ENCODE measurements at regions of chr17 and their contacts with region 1.

Region 1: GRCh38 chr17:36482611-36483504 is 3.6 kb upstream of the ZNHIT3 start:
- DNase-seq: peak; percentile 93
- ATAC-seq: peak; percentile 82
- H3K4me3 Mint-ChIP-seq: peak overlapping the region; percentile 35
- H3K27ac Mint-ChIP-seq: no peak overlapping the region
- H3K4me1 Mint-ChIP-seq: peaks cover 29% of the 10 kb centered on the region
- H3K27me3 Mint-ChIP-seq: peaks cover 64% of the 10 kb centered on the region
- CTCF ChIP-seq: peak; percentile 78

Region 2: GRCh38 chr17:35969558-35970380 is 513.1 kb before region 1 on chr17:
- CTCF ChIA-PET with region 1: interaction called, 21 read pairs
- POLR2A ChIA-PET with region 1: no interaction called
- DNase-seq: peak; percentile 88
- ATAC-seq: peak; percentile 92
- H3K4me3 Mint-ChIP-seq: no peak overlapping the region
- H3K27ac Mint-ChIP-seq: no peak overlapping the region
- H3K4me1 Mint-ChIP-seq: no peaks in the 10 kb centered on the region
- H3K27me3 Mint-ChIP-seq: peaks cover 3% of the 10 kb centered on the region; the same call in 1 of the 2 replicates
- CTCF ChIP-seq: peak; percentile 82

Region 3: DNA sequence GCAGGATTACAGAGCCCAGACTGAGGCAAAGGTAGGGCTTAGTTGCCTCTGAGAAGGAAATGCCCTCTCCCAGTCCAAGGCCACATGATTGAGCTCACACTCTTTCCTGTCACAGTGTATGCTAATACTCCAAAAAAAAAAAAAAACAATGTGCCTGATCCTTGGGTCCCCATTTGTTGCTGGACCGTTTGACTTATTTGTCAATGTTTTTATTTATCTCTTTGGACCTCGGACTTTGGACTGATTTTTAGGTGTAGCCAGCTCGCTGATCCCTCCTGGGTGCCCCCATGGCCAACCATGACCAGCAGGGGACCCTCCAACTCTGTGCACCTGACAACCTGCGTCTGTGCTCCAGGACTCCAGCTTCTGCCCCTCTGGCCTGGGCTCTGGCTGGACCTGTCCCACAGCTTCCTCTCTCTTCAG is 500.9 kb before region 1 on chr17:
- CTCF ChIA-PET with region 1: interaction called, 15 read pairs
- POLR2A ChIA-PET with region 1: no interaction called
- DNase-seq: peak; percentile 61
- ATAC-seq: peak; percentile 75
- H3K4me3 Mint-ChIP-seq: no peak overlapping the region
- H3K27ac Mint-ChIP-seq: no peak overlapping the region
- H3K4me1 Mint-ChIP-seq: no peaks in the 10 kb centered on the region
- H3K27me3 Mint-ChIP-seq: no peaks in the 10 kb centered on the region; the same call in 1 of the 2 replicates
- CTCF ChIP-seq: no peak

Region 4: GRCh38 chr17:36148559-36149295 is 334.1 kb before region 1 on chr17:
- CTCF ChIA-PET with region 1: interaction called, 15 read pairs
- POLR2A ChIA-PET with region 1: no interaction called
- DNase-seq: peak; percentile 66
- ATAC-seq: peak; percentile 90
- H3K4me3 Mint-ChIP-seq: no peak overlapping the region
- H3K27ac Mint-ChIP-seq: no peak overlapping the region
- H3K4me1 Mint-ChIP-seq: peaks cover 9% of the 10 kb centered on the region
- H3K27me3 Mint-ChIP-seq: no peaks in the 10 kb centered on the region; the same call in 1 of the 2 replicates
- CTCF ChIP-seq: peak; percentile 97

Region 5: GRCh38 chr17:36463916-36464315 is 18.9 kb before region 1 on chr17:
- CTCF ChIA-PET with region 1: interaction called, 24 read pairs
- POLR2A ChIA-PET with region 1: no interaction called
- DNase-seq: peak; percentile 94
- ATAC-seq: peak; percentile 99
- H3K4me3 Mint-ChIP-seq: peak overlapping the region; percentile 20
- H3K27ac Mint-ChIP-seq: no peak overlapping the region
- H3K4me1 Mint-ChIP-seq: no peaks in the 10 kb centered on the region
- H3K27me3 Mint-ChIP-seq: peaks cover 41% of the 10 kb centered on the region
- CTCF ChIP-seq: no peak

Region 6: DNA sequence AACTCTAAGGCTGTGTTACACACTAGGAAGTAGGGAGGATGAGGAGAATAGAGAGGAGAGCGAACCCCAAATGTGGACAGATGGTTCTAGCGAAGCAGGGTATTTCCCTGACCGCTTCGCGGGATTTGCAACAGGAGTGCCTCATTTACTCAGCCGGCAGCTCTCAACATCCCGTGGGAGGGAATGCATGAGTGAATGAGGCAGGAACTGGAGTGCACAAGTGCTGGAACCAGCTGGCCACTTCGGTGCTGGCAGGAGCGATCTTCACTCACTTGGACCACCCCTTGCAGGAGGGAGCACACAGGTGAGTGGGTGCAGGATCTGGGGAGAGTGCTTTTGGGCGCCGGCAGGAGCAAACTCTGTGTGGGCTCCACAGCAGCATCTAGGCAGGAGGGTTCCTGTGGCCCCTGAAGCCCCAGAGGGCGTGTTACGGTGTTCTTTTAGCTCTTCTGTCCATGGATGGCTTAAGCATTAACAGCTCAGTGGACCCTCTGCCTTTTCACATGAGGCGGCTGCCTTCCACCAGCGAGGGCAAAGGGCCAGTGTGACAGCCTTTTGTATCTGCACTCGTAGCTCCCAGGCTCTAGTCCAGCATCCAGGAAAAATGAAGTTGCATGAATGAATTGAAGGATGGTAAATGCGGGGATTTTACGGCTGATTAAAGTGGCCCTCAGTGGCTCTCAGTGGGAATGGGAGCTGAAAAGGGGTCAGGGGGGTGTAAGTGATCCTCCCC is 13.8 kb before region 1 on chr17:
- CTCF ChIA-PET with region 1: interaction called, 24 read pairs
- POLR2A ChIA-PET with region 1: no interaction called
- DNase-seq: no peak
- ATAC-seq: no peak
- H3K4me3 Mint-ChIP-seq: no peak overlapping the region
- H3K27ac Mint-ChIP-seq: no peak overlapping the region
- H3K4me1 Mint-ChIP-seq: no peaks in the 10 kb centered on the region
- H3K27me3 Mint-ChIP-seq: peaks cover 30% of the 10 kb centered on the region
- CTCF ChIP-seq: no peak

Region 7: DNA sequence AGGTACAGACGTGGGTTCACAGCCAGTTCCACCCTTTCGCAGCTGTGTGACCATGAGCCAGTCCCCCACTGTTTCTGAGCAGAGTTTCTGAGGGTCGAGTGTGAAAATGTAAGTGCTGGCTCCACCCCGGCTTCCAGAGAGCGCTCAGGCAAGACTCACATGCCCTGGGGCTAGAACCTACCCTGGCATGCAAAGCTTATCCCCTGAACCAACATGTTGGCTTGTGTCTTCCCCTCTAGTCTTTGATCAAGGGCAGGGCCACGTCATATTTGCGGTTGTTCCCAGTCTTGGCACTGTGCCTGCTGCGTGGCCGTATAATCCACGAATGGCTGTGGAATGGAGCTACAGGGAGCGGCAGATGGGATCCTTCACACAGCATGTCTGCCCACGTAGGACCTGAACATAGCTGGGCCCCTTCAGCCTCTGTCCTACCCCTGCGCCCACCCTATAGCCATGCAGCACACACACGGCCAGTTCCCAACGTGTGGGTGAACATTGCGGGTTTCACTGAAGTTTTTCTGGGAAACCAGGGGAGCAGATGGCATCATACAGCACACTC is 203.3 kb after region 1 on chr17:
- CTCF ChIA-PET with region 1: no interaction called
- POLR2A ChIA-PET with region 1: no interaction called
- DNase-seq: no peak
- ATAC-seq: no peak
- H3K4me3 Mint-ChIP-seq: no peak overlapping the region
- H3K27ac Mint-ChIP-seq: no peak overlapping the region
- H3K4me1 Mint-ChIP-seq: peaks cover 30% of the 10 kb centered on the region
- H3K27me3 Mint-ChIP-seq: no peaks in the 10 kb centered on the region
- CTCF ChIP-seq: no peak

Region 8: GRCh38 chr17:36791150-36791941 is 308.5 kb after region 1 on chr17:
- CTCF ChIA-PET with region 1: no interaction called
- POLR2A ChIA-PET with region 1: no interaction called
- DNase-seq: no peak
- ATAC-seq: 0 out of 2 replicates have a peak, but pooled peaks have one; percentile 16
- H3K4me3 Mint-ChIP-seq: no peak overlapping the region
- H3K27ac Mint-ChIP-seq: no peak overlapping the region
- H3K4me1 Mint-ChIP-seq: peaks cover 19% of the 10 kb centered on the region
- H3K27me3 Mint-ChIP-seq: no peaks in the 10 kb centered on the region; the same call in 1 of the 2 replicates
- CTCF ChIP-seq: no peak